ENCODE measurements at regions of chr20 and their contacts with region 1.

Region 1: GRCh38 chr20:58087193-58087858 is 141.1 kb downstream of the ANKRD60 start:
- DNase-seq: peak; percentile 60
- H3K4me3 Mint-ChIP-seq: no peak overlapping the region
- H3K27ac Mint-ChIP-seq: no peak overlapping the region
- H3K4me1 Mint-ChIP-seq: no peaks in the 10 kb centered on the region
- H3K27me3 Mint-ChIP-seq: no peaks in the 10 kb centered on the region
- CTCF ChIP-seq: peak; percentile 77

Region 2: GRCh38 chr20:57654363-57654997 is 432.8 kb before region 1 on chr20:
- CTCF ChIA-PET with region 1: interaction called, 85 read pairs
- POLR2A ChIA-PET with region 1: no interaction called
- intact Hi-C with region 1: loop called (anchors 1 kb)
- DNase-seq: peak; percentile 56
- H3K4me3 Mint-ChIP-seq: no peak overlapping the region
- H3K27ac Mint-ChIP-seq: no peak overlapping the region
- H3K4me1 Mint-ChIP-seq: peaks cover 13% of the 10 kb centered on the region
- H3K27me3 Mint-ChIP-seq: no peaks in the 10 kb centered on the region
- CTCF ChIP-seq: peak; percentile 88

Region 3: DNA sequence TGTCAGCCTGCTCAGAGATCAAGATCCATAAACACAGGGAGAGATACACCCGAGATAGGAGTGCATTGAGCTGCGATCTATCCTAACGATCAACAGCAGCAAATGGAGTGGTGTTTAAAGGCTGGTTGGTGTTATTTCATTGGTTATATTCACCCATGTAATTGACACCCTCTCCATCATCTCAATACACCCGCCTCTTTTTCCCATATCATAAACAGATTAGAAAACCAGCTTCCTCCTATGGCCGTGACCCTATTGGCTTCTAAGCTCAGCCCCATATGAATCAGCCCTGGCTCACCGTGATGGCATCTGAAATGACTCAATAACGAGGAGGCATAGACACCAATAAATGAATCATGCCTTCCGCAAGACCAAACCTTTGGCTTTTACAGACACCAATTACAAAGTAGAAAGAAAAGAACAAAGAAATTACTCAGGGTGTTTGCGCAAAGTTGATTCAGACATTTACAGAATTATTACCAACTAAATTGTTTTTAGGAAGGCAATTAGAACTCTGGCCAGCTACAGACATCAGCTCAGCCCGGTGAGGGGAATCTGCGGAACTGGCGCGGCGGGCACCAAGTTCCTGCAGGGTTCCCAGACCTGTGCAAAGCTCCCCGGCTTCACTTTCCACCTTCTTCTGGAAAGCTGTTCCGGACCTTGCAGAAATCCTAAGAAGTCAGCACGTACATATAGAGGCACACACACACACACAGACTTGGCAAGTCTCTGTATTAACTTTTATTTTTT is 389.0 kb before region 1 on chr20:
- CTCF ChIA-PET with region 1: interaction called, 23 read pairs
- POLR2A ChIA-PET with region 1: no interaction called
- intact Hi-C with region 1: loop called (anchors 1 kb)
- DNase-seq: peak; percentile 99
- H3K4me3 Mint-ChIP-seq: peak overlapping the region; percentile 64
- H3K27ac Mint-ChIP-seq: peak overlapping the region; percentile 66
- H3K4me1 Mint-ChIP-seq: peaks cover 42% of the 10 kb centered on the region
- H3K27me3 Mint-ChIP-seq: no peaks in the 10 kb centered on the region
- CTCF ChIP-seq: no peak

Region 4: DNA sequence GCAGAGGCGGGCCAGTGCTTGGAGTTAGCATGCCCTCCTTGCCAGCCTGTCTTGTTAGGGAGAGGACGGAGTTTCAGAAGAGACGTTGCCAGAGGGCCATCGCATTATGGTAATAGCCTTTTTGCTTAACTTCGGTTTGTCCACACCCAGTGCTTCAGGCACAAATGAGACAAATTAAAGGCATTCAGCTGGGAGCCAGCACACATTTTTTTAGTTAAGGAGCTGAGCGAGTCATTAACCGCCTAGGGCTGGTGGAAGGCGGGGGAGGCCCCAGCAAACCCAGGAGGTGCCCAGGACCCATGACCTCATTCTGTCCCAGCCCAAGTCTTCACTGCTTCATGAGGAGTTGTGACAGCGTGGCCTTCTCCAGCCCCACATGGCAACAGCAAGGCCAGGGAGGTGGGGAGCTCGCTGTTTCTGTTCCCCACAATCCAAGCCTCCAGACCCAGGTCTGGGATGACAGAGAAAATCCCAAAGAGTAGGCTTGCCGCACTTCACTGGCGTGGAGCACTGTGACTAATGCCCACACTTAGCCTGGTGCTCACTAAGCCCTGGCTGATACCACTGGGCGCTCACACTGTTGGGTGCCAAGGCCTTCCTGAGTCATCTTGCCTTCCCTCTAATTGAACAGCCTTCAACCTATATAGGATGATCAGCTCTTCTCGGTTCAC is 96.0 kb before region 1 on chr20:
- CTCF ChIA-PET with region 1: interaction called, 4 read pairs
- POLR2A ChIA-PET with region 1: interaction called, 5 read pairs
- intact Hi-C with region 1: loop called (anchors 10 kb)
- DNase-seq: peak; percentile 92
- H3K4me3 Mint-ChIP-seq: peak overlapping the region; percentile 34
- H3K27ac Mint-ChIP-seq: peak overlapping the region; percentile 85
- H3K4me1 Mint-ChIP-seq: peaks cover 22% of the 10 kb centered on the region
- H3K27me3 Mint-ChIP-seq: no peaks in the 10 kb centered on the region
- CTCF ChIP-seq: no peak

Region 5: DNA sequence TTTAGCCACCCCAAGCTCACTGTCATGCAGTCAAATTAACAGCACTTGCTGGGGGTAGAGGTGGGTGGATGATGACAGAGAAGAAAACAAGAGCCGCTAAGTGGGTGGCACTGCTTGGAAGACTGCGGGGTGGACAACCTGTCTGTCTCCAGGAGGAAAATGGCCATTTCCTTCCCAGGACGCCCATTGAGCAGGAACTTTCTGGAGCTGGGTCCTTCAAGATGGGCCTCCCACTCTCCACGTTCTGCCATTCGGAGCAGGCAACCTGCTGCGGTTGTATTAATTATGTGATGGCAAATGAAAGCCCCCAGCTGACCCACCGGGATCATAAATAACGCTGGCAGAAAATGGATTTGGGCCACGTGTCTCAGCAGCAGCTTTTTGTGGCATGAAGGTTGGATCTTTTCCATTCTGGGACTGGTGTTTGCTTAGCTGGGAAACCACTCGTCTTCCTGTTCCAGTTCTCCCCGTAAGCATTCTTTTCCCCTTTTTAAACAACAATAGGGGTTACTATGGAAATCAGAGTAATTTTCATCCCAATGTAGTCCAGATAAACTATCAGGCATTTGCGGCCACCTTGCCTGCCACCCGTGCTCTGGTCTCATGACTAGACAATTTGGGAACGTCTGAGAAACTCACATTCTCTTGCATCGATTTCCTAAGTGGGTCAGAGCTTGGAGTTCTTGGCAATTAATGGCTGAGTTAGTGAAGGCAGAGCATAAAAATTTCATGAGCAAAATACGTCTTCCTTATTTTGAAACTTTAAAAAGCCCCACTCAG is 74.4 kb before region 1 on chr20:
- CTCF ChIA-PET with region 1: no interaction called
- POLR2A ChIA-PET with region 1: no interaction called
- intact Hi-C with region 1: no loop called
- DNase-seq: no peak
- H3K4me3 Mint-ChIP-seq: no peak overlapping the region
- H3K27ac Mint-ChIP-seq: no peak overlapping the region
- H3K4me1 Mint-ChIP-seq: peaks cover 21% of the 10 kb centered on the region
- H3K27me3 Mint-ChIP-seq: peaks cover 8% of the 10 kb centered on the region
- CTCF ChIP-seq: no peak

Region 6: GRCh38 chr20:58102260-58102659 is 14.9 kb after region 1 on chr20:
- CTCF ChIA-PET with region 1: interaction called, 58 read pairs
- POLR2A ChIA-PET with region 1: interaction called, 5 read pairs
- intact Hi-C with region 1: no loop called
- DNase-seq: peak; percentile 75
- H3K4me3 Mint-ChIP-seq: no peak overlapping the region
- H3K27ac Mint-ChIP-seq: peak overlapping the region; percentile 66
- H3K4me1 Mint-ChIP-seq: peaks cover 15% of the 10 kb centered on the region
- H3K27me3 Mint-ChIP-seq: no peaks in the 10 kb centered on the region
- CTCF ChIP-seq: no peak

Region 7: GRCh38 chr20:58179432-58180099 is 92.2 kb after region 1 on chr20:
- CTCF ChIA-PET with region 1: interaction called, 21 read pairs
- POLR2A ChIA-PET with region 1: no interaction called
- intact Hi-C with region 1: loop called (anchors 1 kb)
- DNase-seq: peak; percentile 40
- H3K4me3 Mint-ChIP-seq: no peak overlapping the region
- H3K27ac Mint-ChIP-seq: no peak overlapping the region
- H3K4me1 Mint-ChIP-seq: no peaks in the 10 kb centered on the region
- H3K27me3 Mint-ChIP-seq: peaks cover 32% of the 10 kb centered on the region
- CTCF ChIP-seq: peak; percentile 99

Region 8: DNA sequence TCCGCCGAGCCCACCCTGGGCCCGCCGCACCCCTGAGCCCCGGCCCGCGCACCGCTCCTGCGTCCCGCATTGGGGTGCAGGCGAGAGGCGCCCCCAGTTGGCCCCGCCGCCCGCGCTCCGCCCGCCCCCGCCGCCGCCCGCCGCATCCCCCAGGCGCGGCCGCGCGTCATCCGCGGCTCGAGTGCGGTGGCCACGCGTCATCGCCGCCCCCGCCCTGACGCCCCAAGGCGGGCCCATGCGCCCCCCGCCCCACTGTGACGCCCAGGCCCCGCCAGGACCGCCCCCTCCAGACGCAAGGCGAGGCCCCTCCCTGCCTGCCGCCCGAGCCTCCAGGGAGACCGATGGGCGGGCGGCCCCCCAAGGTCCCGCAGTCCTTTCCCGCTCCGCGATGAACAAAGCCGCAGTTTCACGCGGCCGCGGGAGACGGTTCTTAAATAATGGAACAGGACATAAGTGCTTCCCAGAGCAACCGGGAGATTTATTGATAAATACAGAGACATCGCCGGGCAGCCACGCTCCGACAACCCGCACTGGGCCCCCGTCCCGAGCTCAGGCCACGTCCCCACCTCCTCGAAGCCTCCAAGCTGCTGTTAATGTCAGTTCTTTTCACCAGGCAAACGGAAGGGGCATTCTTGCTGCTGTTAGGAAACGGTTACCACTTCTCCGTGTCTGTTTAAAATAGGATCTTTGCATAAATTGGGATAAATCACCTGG is 141.3 kb after region 1 on chr20 and contains the start of gene ANKRD60:
- CTCF ChIA-PET with region 1: no interaction called
- POLR2A ChIA-PET with region 1: no interaction called
- intact Hi-C with region 1: no loop called
- DNase-seq: no peak
- H3K4me3 Mint-ChIP-seq: no peak within 1 kb of the TSS
- H3K27ac Mint-ChIP-seq: no peak within 1 kb of the TSS
- H3K4me1 Mint-ChIP-seq: no peaks in the 10 kb centered on the region
- H3K27me3 Mint-ChIP-seq: peaks cover 17% of the 10 kb centered on the region
- CTCF ChIP-seq: no peak
- total RNA-seq, gene ANKRD60: not detected in 2 replicates